Adrenal gland (tissue), 19 donors: ENCODE measurements at regions of chr19 and their contacts with region 1.

Region 1: GRCh38 chr19:12521996-12522395 is 29.3 kb downstream of the ZNF564 start:
- DNase-seq: no peak
- H3K4me3 ChIP-seq: no peak overlapping the region
- H3K27ac ChIP-seq: no peak overlapping the region
- H3K4me1 ChIP-seq: no peaks in the 10 kb centered on the region
- H3K27me3 ChIP-seq: no peaks in the 10 kb centered on the region
- CTCF ChIP-seq: no peak
- POLR2A ChIP-seq: no peak

Region 2: GRCh38 chr19:12112701-12113100 is 409.3 kb before region 1 on chr19:
- intact Hi-C with region 1: no loop called
- DNase-seq: no peak
- H3K4me3 ChIP-seq: no peak overlapping the region
- H3K27ac ChIP-seq: no peak overlapping the region
- H3K4me1 ChIP-seq: no peaks in the 10 kb centered on the region
- H3K27me3 ChIP-seq: no peaks in the 10 kb centered on the region
- CTCF ChIP-seq: no peak
- POLR2A ChIP-seq: no peak

Region 3: GRCh38 chr19:12465211-12465610 is 56.8 kb before region 1 on chr19:
- intact Hi-C with region 1: loop called in 1 of 2 experiments (anchors 5 kb)
- DNase-seq: no peak
- H3K4me3 ChIP-seq: no peak overlapping the region
- H3K27ac ChIP-seq: no peak overlapping the region
- H3K4me1 ChIP-seq: no peaks in the 10 kb centered on the region
- H3K27me3 ChIP-seq: no peaks in the 10 kb centered on the region
- CTCF ChIP-seq: no peak
- POLR2A ChIP-seq: no peak

Region 4: GRCh38 chr19:12580163-12580694 is 58.2 kb after region 1 on chr19:
- intact Hi-C with region 1: no loop called
- DNase-seq: no peak
- H3K4me3 ChIP-seq: no peak overlapping the region
- H3K27ac ChIP-seq: no peak overlapping the region
- H3K4me1 ChIP-seq: no peaks in the 10 kb centered on the region
- H3K27me3 ChIP-seq: no peaks in the 10 kb centered on the region
- CTCF ChIP-seq: no peak
- POLR2A ChIP-seq: no peak

Region 5: GRCh38 chr19:12596927-12597548 is 75.0 kb after region 1 on chr19:
- intact Hi-C with region 1: no loop called
- DNase-seq: peak in 1 of 7 donors; percentile 57
- H3K4me3 ChIP-seq: no peak overlapping the region
- H3K27ac ChIP-seq: no peak overlapping the region
- H3K4me1 ChIP-seq: no peaks in the 10 kb centered on the region
- H3K27me3 ChIP-seq: no peaks in the 10 kb centered on the region
- CTCF ChIP-seq: no peak
- POLR2A ChIP-seq: no peak

Region 6: DNA sequence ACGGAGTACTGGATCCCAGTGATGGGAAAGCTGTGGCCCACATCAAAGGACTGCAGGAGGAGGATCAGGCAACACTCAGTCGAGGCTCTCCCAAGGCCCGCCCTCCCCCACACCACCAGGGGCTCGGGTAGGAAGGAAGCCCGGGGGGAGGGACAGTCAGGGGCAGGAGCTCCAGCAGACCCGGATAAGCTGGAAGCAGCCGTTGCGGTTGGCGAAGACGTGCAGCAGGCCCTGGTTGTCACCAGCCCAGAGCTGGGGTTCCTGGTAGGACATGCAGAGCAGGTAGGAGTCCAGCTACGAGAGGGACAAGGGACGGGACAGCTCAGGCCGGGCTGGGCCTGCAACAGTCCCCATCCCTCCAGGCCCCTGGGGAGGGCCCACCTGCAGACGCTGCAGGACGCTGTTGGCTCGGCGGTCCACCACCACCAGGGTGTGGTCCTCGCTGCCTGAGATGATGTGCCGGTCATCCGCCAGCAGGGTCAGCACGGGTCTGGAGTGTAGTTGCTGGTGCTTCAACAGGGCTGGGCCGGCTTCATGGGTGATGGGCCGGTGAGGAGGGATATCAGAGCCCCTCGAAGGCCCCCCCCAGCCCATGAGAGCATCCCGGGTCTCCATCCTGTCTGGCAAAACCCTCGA is 167.7 kb after region 1 on chr19:
- intact Hi-C with region 1: no loop called
- DNase-seq: no peak
- H3K4me3 ChIP-seq: no peak overlapping the region
- H3K27ac ChIP-seq: no peak overlapping the region
- H3K4me1 ChIP-seq: no peaks in the 10 kb centered on the region
- H3K27me3 ChIP-seq: no peaks in the 10 kb centered on the region
- CTCF ChIP-seq: no peak
- POLR2A ChIP-seq: no peak